ENCODE measurements at regions of chr1 and their contacts with region 1.

Region 1: DNA sequence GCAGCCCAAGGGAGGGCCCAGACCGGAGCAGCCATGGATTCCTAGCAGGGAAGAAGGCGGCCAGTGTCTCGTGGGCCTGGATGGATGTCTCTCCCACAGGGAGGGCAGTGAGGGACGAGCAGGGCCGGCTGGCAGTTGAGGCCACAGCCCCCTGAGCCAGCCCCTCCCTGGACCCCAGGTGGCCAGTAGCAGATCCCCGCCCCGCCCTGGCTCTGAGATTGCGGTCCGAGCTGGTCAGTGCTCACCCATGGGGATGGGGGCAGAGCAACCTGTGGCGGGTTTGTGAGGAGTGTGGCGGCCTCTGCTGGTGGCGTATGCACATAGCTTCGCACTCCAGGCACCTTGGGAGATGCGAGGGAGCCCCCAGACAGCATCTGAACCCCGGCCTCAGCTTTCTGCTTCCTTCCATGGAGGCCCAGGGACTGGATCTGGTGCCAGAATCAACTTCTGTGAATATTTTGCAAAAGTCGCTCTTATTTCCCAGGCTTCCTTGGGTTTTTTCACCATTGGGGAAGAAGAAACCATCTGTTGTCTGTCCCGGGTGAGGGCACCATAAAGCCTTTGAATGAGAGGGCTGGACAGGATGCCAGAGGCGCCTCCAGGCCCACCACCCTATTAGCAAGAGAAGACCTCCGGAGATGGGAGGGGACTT is 8.4 kb upstream of the KCNN3 start:
- DNase-seq: no peak
- H3K4me3 ChIP-seq: no peak overlapping the region
- H3K27me3 ChIP-seq: peaks cover 7% of the 10 kb centered on the region
- CTCF ChIP-seq: peak; percentile 87

Region 2: DNA sequence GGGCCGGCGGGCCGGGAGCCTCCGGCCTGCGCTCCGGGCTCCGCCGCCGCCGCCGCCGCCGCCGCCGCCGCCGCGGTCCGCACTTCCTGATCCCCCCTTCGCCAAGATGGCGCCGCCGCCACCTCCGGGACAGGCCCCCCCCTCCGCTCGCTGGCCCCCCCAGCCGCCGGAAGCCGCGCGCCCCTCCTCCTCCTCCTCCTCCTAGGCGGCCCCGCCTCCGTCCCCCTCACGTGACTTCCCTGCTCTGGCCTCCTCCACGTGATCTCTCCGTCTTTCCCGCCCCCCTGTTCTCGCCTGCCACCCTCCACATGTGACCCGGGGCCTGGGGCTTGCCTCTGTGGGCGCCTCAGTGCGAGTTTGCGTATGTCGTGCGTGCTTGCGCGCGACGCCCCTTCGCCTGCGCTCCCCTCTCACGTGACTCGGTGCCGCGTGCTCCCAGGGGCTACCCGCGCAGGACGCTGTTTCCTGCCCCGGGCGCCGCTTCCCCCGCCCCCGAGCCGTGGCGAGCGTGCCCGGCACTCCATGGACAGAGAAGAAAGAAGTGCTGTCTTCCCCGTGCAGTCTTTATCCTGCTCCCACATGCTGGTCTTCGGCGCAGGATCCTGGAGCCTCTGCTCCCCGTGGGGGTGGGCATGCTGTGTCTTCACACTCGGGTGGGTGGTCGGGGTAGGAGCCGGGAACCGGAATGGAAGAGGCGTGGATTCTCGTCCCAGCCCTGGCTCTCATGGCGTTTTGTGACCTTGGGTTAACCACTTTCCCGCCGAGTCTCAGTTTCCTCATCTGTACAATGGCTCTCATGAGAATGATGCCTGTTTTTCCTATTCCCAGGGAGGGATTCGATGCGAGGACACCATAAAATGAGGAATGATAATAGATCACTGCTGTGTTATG is 319.7 kb before region 1 on chr1 and contains the start of gene UBE2Q1:
- CTCF ChIA-PET with region 1: interaction called, 29 read pairs
- POLR2A ChIA-PET with region 1: no interaction called
- DNase-seq: peak; percentile 88
- H3K4me3 ChIP-seq: peak within 1 kb of the TSS; percentile 85
- H3K27me3 ChIP-seq: no peaks in the 10 kb centered on the region
- CTCF ChIP-seq: no peak
- polyA plus RNA-seq, gene UBE2Q1: 11.0 and 16.1 TPM in 2 replicates

Region 3: DNA sequence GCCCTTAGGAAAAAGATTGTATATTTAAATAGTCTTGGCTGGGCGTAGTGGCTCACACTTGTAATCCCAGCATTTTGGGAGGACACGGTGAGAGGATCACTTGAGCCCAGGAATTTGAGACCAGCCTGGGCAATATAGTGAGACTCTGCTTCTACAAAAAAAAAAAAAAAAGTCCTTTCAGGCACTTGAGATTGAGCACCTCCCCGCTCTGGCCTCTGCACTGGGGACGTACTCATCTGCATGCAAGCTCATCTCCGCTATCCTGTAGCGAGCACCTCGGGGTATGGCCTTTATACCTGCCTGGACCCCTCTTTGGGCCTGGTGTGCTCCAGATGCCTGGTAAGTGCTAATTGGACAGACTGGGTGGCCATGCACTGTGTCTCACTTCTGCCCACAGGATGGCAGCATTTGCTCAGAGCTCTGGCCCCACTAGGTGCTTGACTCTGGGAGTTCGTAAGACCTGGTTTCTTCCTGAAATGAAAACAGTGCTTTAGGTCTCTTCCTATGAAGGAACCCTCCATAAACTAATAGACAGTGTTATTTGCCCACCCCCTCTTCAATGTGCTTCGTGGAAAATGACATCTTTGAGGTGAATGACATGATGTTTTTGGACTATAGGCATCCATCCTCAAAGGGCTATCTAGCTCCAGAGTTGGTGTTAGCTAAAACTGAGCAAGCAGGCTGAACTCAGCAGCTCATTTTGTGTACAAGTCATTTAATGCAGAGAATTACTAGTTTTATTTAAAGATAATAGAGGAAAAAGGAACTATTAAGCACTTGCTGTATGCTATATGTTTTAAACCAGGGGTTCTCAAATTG is 208.8 kb before region 1 on chr1:
- CTCF ChIA-PET with region 1: interaction called, 36 read pairs
- POLR2A ChIA-PET with region 1: no interaction called
- DNase-seq: peak; percentile 4
- H3K4me3 ChIP-seq: no peak overlapping the region
- H3K27me3 ChIP-seq: peaks cover 5% of the 10 kb centered on the region; the same call in 1 of the 2 replicates
- CTCF ChIP-seq: peak; percentile 70

Region 4: DNA sequence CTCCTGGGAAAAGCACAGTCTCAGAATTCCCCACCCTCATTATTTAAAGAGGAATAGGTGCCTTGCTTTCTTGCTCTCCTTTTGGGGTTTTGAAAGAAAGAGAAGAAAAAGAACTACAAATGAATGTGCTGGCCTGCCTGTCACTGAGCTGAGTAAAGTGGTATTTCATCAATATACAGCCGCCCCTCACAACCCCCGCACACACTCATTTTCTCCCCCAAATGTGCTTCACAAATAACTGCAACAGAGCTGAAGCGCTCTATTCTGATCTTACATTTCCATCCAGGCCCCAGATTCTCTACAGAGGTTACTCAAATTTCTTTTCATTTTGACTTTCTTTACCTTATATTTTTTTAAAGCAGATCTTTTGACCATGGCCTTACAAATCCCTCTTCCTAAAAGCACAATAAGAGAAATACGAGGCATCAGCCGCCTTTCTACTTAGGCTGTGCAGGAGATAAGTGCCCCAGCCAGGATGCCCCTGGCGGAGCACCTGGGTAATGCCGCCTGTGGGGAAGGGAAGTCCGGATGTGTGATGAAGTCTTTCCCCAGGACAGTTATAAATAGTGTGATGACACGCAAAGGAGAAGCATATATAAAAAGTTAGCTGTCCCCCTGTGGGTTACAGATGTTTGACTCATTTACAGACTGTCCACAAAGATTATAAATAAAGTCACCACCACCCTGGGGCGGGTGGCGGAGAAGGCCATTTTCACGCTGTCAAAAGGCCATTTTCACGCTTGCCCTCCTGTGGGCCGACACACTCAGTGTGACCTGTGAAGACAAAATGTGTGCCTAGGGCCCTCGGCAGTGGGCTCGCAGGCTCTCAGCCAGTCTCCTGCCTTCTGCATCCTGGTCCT is 15.0 kb before region 1 on chr1:
- CTCF ChIA-PET with region 1: interaction called, 13 read pairs
- POLR2A ChIA-PET with region 1: no interaction called
- DNase-seq: no peak
- H3K4me3 ChIP-seq: no peak overlapping the region
- H3K27me3 ChIP-seq: peaks cover 21% of the 10 kb centered on the region
- CTCF ChIP-seq: peak; percentile 33

Region 5: DNA sequence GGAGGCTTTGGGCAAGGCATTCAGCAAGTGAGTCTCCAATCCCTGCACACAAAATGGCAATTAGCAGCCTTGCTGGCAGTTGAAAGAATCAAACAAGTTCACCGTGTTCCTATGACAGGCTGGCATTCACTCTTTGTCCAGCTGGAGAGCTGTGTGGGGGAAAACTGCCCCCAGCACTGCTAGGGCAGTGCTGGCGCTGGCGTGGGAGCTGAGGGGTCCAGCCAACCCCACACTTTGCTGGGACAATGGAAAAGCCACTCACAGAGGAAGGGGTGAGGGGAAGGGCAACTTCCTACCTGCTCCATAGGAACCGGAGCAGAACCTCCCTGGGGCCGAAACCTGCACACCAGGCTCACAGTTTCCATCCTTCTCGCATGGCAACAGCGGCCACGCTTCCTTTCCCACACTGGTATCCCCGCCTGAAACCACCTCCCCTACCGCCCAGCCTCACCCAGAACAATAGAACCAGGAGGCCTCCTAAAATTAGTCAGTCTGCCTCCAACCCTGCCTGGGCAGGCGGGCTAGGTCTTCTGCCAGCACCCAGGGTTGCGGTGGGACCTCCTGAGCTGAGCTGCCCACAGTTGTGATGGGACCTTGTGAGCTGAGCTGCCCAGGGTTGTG is 18.4 kb after region 1 on chr1:
- CTCF ChIA-PET with region 1: interaction called, 10 read pairs
- POLR2A ChIA-PET with region 1: no interaction called
- DNase-seq: no peak
- H3K4me3 ChIP-seq: no peak overlapping the region
- H3K27me3 ChIP-seq: peaks cover 6% of the 10 kb centered on the region
- CTCF ChIP-seq: no peak

Region 6: DNA sequence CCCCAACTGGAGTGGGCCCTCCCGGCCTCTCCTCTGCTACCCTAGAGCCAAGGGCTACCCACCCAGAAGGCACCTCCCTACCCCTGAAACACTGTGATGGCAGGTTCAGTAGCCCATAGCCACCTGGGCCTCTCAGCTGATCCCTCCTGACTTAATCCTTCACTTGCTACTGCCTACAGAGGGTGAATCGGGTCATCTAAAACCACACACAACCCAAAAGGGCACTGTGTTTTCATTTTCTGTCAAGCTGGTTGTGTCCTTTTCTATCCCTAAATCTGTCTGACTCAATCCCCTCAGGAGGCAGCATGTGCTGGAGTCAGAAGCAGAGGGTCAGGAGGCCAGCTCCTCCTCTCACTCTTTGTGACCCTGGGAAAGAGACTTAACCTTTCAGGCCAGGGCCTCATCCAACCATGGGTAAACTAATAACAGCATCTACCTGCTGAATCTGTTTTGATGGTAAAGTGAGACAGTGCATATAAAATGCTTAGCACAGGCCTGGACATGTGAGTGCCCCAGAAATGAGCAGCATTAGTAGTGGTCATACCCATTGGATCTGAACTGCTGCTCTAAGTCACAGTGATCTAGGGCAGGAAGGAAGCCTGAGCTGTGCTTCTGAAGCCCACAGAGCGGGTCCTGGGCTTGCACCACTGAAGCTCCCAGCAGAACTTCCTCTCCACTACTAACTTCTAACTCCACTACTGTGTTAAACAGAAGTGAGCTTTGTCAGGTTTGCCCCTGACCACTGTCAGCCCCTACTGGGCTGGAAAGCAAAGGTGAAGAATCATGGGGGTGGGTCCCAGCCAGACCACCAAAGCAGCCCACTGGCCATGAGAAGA is 47.1 kb after region 1 on chr1:
- CTCF ChIA-PET with region 1: no interaction called
- POLR2A ChIA-PET with region 1: no interaction called
- DNase-seq: no peak
- H3K4me3 ChIP-seq: no peak overlapping the region
- H3K27me3 ChIP-seq: no peaks in the 10 kb centered on the region
- CTCF ChIP-seq: no peak

Region 7: DNA sequence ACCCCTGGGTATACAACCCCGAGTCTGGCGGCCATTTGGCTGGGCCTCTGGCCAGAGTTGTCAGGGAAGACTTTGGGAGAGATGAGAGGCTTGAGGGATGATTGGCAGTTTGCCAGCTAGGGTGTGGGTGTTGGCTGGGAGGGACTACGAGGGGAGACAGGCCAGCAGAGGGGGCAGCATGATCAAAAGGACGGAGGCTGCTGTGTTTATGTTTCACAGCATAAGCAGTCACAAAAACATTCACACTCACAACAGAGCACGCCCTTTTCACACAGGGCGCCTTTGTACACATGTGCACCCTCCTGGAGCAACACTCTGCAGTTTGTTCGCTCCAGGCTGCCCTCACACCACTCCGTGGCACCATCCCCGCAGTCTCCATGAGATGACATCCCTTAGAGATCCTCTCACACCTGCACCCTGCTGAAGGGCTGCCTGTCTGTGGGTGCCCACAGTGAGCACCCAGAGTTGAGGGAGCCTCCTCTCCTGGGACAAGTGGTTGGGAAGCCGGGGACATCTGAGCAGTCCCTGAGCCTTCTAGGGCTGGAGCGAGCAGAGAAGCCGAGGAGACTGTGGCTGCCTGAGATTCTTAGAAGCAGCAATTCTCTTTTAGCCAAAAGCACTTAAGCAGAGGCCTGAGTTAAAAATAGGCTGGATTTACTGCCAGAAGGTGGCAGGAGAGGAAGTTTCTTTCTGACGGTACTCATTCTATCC is 215.6 kb after region 1 on chr1:
- CTCF ChIA-PET with region 1: no interaction called
- POLR2A ChIA-PET with region 1: no interaction called
- DNase-seq: no peak
- H3K4me3 ChIP-seq: no peak overlapping the region
- H3K27me3 ChIP-seq: peaks cover 8% of the 10 kb centered on the region
- CTCF ChIP-seq: peak; percentile 55

Region 8: GRCh38 chr1:155172732-155173477 is 294.4 kb after region 1 on chr1 and contains the start of gene KRTCAP2:
- CTCF ChIA-PET with region 1: no interaction called
- POLR2A ChIA-PET with region 1: no interaction called
- DNase-seq: peak; percentile 73
- H3K4me3 ChIP-seq: peak within 1 kb of the TSS; percentile 97
- H3K27me3 ChIP-seq: no peaks in the 10 kb centered on the region
- CTCF ChIP-seq: peak; percentile 98
- polyA plus RNA-seq, gene KRTCAP2: 211 and 225 TPM in 2 replicates